ENCODE measurements at regions of chr22 and their contacts with region 1.

Region 1: DNA sequence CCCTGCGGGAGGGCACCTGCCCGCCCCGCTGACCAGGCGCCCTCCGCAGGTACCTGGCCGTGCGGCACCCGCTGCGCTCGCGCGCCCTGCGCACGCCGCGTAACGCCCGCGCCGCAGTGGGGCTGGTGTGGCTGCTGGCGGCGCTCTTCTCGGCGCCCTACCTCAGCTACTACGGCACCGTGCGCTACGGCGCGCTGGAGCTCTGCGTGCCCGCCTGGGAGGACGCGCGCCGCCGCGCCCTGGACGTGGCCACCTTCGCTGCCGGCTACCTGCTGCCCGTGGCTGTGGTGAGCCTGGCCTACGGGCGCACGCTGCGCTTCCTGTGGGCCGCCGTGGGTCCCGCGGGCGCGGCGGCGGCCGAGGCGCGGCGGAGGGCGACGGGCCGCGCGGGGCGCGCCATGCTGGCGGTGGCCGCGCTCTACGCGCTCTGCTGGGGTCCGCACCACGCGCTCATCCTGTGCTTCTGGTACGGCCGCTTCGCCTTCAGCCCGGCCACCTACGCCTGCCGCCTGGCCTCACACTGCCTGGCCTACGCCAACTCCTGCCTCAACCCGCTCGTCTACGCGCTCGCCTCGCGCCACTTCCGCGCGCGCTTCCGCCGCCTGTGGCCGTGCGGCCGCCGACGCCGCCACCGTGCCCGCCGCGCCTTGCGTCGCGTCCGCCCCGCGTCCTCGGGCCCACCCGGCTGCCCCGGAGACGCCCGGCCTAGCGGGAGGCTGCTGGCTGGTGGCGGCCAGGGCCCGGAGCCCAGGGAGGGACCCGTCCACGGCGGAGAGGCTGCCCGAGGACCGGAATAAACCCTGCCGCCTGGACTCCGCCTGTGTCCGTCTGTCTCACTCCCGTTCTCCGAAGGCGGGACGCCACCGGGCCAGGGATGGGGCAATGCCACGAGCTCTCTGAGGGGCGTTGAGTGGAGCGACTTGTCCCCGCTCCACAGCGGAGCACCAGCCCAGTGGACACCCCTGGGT is 1.8 kb downstream of the GALR3 start:
- DNase-seq: peak in 1 of 2 experiments; percentile 72
- H3K4me3 ChIP-seq: peak overlapping the region; percentile 24 to 57 (median 44)
- H3K27ac ChIP-seq: no peak overlapping the region
- H3K4me1 ChIP-seq: peaks cover 5 to 25% (median 15%) of the 10 kb centered on the region in 4 experiments
- H3K27me3 ChIP-seq: peaks cover 8 to 30% (median 25%) of the 10 kb centered on the region in 4 experiments
- CTCF ChIP-seq: peak; percentile 55 to 78 (median 58)
- EP300 ChIP-seq: no peak
- POLR2A ChIP-seq: peak in 1 of 2 experiments; percentile 40; a peak in 1 of 3 replicates
- RAD21 ChIP-seq: peak in 1 of 2 experiments; percentile 26; a peak in 1 of 4 replicates

Region 2: DNA sequence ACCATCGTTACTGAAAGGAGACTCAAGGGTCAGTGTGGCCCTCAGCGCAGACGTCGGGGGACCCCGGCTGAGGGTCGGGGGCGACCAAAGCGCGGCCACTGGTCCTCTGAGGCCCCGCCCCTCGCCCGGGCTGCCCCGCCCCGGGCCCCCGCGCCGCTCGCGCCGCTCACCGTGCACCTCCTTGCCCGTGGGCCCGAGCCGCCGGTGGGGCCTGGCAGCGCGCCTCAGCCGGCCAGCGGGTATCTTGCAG is 18.7 kb after region 1 on chr22:
- CTCF ChIA-PET with region 1: interaction called, 19 read pairs
- POLR2A ChIA-PET with region 1: interaction called, 29 read pairs
- DNase-seq: no peak
- H3K4me3 ChIP-seq: peak overlapping the region; percentile 61 to 82 (median 67)
- H3K27ac ChIP-seq: 0 out of 2 replicates have a peak overlapping the region, but pooled peaks have one; percentile 47
- H3K4me1 ChIP-seq: peaks cover 0 to 2% (median 1%) of the 10 kb centered on the region in 4 experiments; a peak in 2 of 7 replicates
- H3K27me3 ChIP-seq: no peaks in the 10 kb centered on the region
- CTCF ChIP-seq: no peak
- EP300 ChIP-seq: no peak
- POLR2A ChIP-seq: no peak
- RAD21 ChIP-seq: no peak

Region 3: GRCh38 chr22:37849089-37849751 is 24.3 kb after region 1 on chr22 and contains the start of gene EIF3L:
- CTCF ChIA-PET with region 1: interaction called, 29 read pairs
- POLR2A ChIA-PET with region 1: interaction called, 29 read pairs
- DNase-seq: peak; percentile 68 to 90
- H3K4me3 ChIP-seq: peak within 1 kb of the TSS; percentile 96 to 99 (median 98)
- H3K27ac ChIP-seq: peak within 1 kb of the TSS; percentile 86
- H3K4me1 ChIP-seq: peaks cover 0 to 2% (median 2%) of the 10 kb centered on the region in 4 experiments; a peak in 3 of 7 replicates
- H3K27me3 ChIP-seq: no peaks in the 10 kb centered on the region
- CTCF ChIP-seq: no peak
- EP300 ChIP-seq: no peak
- POLR2A ChIP-seq: peak; percentile 89 to 98
- RAD21 ChIP-seq: no peak
- total RNA-seq, gene EIF3L: 622 and 639 TPM in 2 replicates

Region 4: DNA sequence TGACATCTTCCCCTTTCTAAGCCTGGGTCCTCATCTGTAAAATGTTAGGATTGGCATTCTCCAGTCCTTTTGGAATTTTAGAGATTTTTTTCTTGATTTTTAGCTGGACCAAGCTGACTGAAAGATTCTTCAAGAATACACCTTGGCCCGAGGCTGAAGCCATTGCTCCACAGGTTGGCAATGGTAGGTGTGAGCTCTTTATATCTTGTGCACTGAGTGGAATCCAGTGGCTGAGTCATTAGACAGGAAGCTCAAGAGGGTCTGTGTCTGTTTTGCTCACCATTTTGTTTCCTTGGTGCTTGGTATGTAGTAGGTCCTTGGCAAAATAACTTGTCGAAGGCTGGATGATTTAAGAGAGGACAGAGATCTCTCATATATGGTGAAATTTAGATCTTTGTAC is 30.5 kb after region 1 on chr22:
- CTCF ChIA-PET with region 1: interaction called, 29 read pairs
- POLR2A ChIA-PET with region 1: interaction called, 42 read pairs
- DNase-seq: no peak
- H3K4me3 ChIP-seq: no peak overlapping the region
- H3K27ac ChIP-seq: no peak overlapping the region
- H3K4me1 ChIP-seq: no peaks in the 10 kb centered on the region
- H3K27me3 ChIP-seq: no peaks in the 10 kb centered on the region
- CTCF ChIP-seq: no peak
- EP300 ChIP-seq: no peak
- POLR2A ChIP-seq: no peak
- RAD21 ChIP-seq: no peak

Measured in H1 (cell line).